Caco-2 (cell line): ENCODE measurements at regions of chr14 and their contacts with region 1.

Region 1: DNA sequence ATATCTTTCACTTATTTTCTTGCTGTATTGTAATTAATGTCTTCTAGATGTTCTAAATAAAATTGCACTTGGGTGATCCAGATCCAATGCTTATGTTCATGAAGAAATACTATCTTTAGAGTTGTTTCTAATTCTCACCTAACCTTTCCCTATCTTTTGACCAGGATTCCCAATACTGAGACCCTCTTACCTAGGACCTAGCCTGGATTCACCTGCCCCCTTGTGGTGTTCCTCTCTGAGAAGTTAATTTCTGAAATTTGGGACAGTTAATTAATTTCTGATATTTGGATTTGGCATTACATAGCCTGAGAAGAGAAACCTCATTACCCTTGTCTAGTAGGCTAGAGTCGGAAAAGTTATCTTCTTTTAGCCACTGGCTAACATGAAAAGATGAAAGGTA is 29.5 kb downstream of the FOXA1 start:
- DNase-seq: peak in 1 of 2 experiments; percentile 54
- H3K4me3 ChIP-seq: peak overlapping the region; percentile 48
- H3K4me3 Mint-ChIP-seq: peak overlapping the region; percentile 88
- H3K27ac Mint-ChIP-seq: peak overlapping the region; percentile 84
- H3K4me1 ChIP-seq: peaks cover 68% of the 10 kb centered on the region
- H3K4me1 Mint-ChIP-seq: peaks cover 38% of the 10 kb centered on the region
- H3K27me3 ChIP-seq: no peaks in the 10 kb centered on the region
- H3K27me3 Mint-ChIP-seq: no peaks in the 10 kb centered on the region
- CTCF ChIP-seq: peak; percentile 67 to 68

Region 2: GRCh38 chr14:37197421-37198272 is 367.9 kb before region 1 on chr14 and contains the start of gene MIPOL1:
- CTCF ChIA-PET with region 1: no interaction called
- POLR2A ChIA-PET with region 1: no interaction called
- intact Hi-C with region 1: no loop called
- DNase-seq: peak; percentile 83 to 86
- H3K4me3 ChIP-seq: peak within 1 kb of the TSS; percentile 73
- H3K4me3 Mint-ChIP-seq: peak within 1 kb of the TSS; percentile 98
- H3K27ac Mint-ChIP-seq: peak within 1 kb of the TSS; percentile 98
- H3K4me1 ChIP-seq: peaks cover 13% of the 10 kb centered on the region; the same call in 1 of the 2 replicates
- H3K4me1 Mint-ChIP-seq: peaks cover 18% of the 10 kb centered on the region
- H3K27me3 ChIP-seq: no peaks in the 10 kb centered on the region
- H3K27me3 Mint-ChIP-seq: no peaks in the 10 kb centered on the region
- CTCF ChIP-seq: peak in 1 of 2 experiments; percentile 52
- total RNA-seq, gene MIPOL1: 18.7 and 20.9 TPM in 2 replicates

Region 3: GRCh38 chr14:37246427-37246914 is 319.1 kb before region 1 on chr14:
- CTCF ChIA-PET with region 1: no interaction called
- POLR2A ChIA-PET with region 1: no interaction called
- intact Hi-C with region 1: loop called (anchors 2 kb)
- DNase-seq: peak in 1 of 2 experiments; percentile 35
- H3K4me3 ChIP-seq: no peak overlapping the region
- H3K4me3 Mint-ChIP-seq: no peak overlapping the region
- H3K27ac Mint-ChIP-seq: no peak overlapping the region
- H3K4me1 ChIP-seq: peaks cover 36% of the 10 kb centered on the region
- H3K4me1 Mint-ChIP-seq: peaks cover 5% of the 10 kb centered on the region
- H3K27me3 ChIP-seq: no peaks in the 10 kb centered on the region
- H3K27me3 Mint-ChIP-seq: no peaks in the 10 kb centered on the region
- CTCF ChIP-seq: peak; percentile 68 to 87

Region 4: DNA sequence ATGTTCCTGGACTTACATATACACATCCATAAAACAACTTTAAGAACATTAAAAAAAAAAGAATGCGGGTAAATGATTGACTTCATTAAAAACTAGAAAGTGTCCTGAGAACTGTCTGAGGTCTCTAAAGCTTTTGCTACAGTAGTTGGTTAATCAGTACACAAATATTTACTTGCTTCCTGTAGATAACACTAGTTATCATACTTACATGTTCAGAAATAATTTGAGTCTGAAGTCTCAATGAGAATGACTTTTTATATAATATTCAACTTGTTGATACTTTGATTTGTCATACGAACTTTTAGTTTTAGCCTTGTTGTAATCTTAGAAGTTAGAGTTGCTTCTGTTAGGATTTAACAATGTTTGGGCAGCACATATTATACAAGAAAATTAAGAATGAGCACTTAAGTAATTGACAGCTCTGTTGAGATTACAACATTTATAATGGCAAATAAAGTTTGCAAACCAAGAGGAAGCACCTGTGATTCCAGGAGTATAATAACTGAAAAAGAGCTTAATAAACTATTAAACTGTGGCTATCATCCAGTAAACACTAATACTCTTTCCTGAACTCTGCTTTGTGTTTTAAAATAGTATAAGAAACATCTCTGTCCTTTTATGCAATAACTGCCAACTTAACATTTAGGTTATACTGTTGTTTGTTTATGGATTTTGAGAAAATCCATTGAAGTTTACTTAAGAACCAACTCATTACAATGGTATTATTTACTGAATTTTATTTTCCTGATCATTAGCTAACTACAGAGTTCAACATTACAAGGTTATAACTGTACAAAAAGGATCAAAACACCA is 236.2 kb before region 1 on chr14:
- CTCF ChIA-PET with region 1: no interaction called
- POLR2A ChIA-PET with region 1: no interaction called
- intact Hi-C with region 1: loop called (anchors 5 kb)
- DNase-seq: peak in 1 of 2 experiments; percentile 27
- H3K4me3 ChIP-seq: no peak overlapping the region
- H3K4me3 Mint-ChIP-seq: peak overlapping the region; percentile 56
- H3K27ac Mint-ChIP-seq: peak overlapping the region; percentile 65
- H3K4me1 ChIP-seq: peaks cover 23% of the 10 kb centered on the region
- H3K4me1 Mint-ChIP-seq: peaks cover 15% of the 10 kb centered on the region
- H3K27me3 ChIP-seq: no peaks in the 10 kb centered on the region
- H3K27me3 Mint-ChIP-seq: no peaks in the 10 kb centered on the region
- CTCF ChIP-seq: no peak

Region 5: GRCh38 chr14:37403626-37404025 is 161.9 kb before region 1 on chr14:
- CTCF ChIA-PET with region 1: no interaction called
- POLR2A ChIA-PET with region 1: no interaction called
- intact Hi-C with region 1: loop called (anchors 5 kb)
- DNase-seq: no peak
- H3K4me3 ChIP-seq: no peak overlapping the region
- H3K4me3 Mint-ChIP-seq: no peak overlapping the region
- H3K27ac Mint-ChIP-seq: no peak overlapping the region
- H3K4me1 ChIP-seq: peaks cover 82% of the 10 kb centered on the region
- H3K4me1 Mint-ChIP-seq: peaks cover 44% of the 10 kb centered on the region
- H3K27me3 ChIP-seq: no peaks in the 10 kb centered on the region
- H3K27me3 Mint-ChIP-seq: no peaks in the 10 kb centered on the region
- CTCF ChIP-seq: no peak

Region 6: DNA sequence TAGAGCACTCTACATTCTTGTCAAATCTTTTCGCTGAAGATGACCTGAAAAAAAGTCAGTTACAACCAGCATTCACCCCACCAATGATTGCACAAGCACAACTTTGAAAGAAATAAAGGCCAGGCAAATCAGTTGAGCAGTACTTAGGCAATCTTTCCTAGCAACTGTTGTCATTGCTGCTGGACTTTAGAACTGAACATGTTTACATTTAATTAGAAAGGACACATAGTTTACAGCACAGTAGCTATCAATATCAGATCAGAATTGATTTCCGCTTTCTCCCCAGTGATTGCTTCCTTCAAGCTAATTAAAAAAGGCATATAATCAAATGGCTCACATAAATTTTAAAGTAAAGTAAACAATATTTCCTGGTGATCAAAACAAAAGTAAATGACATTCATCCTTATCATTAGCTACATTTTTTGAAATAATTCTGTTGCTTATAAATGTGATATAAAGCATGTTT is 98.9 kb before region 1 on chr14:
- CTCF ChIA-PET with region 1: no interaction called
- POLR2A ChIA-PET with region 1: no interaction called
- intact Hi-C with region 1: loop called (anchors 1 kb)
- DNase-seq: peak; percentile 85 to 88
- H3K4me3 ChIP-seq: no peak overlapping the region
- H3K4me3 Mint-ChIP-seq: peak overlapping the region; percentile 48
- H3K27ac Mint-ChIP-seq: peak overlapping the region; percentile 91
- H3K4me1 ChIP-seq: peaks cover 24% of the 10 kb centered on the region
- H3K4me1 Mint-ChIP-seq: peaks cover 11% of the 10 kb centered on the region
- H3K27me3 ChIP-seq: no peaks in the 10 kb centered on the region
- H3K27me3 Mint-ChIP-seq: no peaks in the 10 kb centered on the region
- CTCF ChIP-seq: no peak

Region 7: GRCh38 chr14:37583359-37584231 is 18.0 kb after region 1 on chr14:
- CTCF ChIA-PET with region 1: interaction called, 5 read pairs
- POLR2A ChIA-PET with region 1: interaction called, 7 read pairs
- intact Hi-C with region 1: loop called (anchors 1 kb)
- DNase-seq: peak; percentile 92
- H3K4me3 ChIP-seq: peak overlapping the region; percentile 72
- H3K4me3 Mint-ChIP-seq: peak overlapping the region; percentile 78
- H3K27ac Mint-ChIP-seq: peak overlapping the region; percentile 97
- H3K4me1 ChIP-seq: peaks cover 32% of the 10 kb centered on the region
- H3K4me1 Mint-ChIP-seq: peaks cover 23% of the 10 kb centered on the region
- H3K27me3 ChIP-seq: no peaks in the 10 kb centered on the region
- H3K27me3 Mint-ChIP-seq: no peaks in the 10 kb centered on the region
- CTCF ChIP-seq: peak in 1 of 2 experiments; percentile 3

Region 8: GRCh38 chr14:37623423-37623951 is 57.9 kb after region 1 on chr14:
- CTCF ChIA-PET with region 1: no interaction called
- POLR2A ChIA-PET with region 1: no interaction called
- intact Hi-C with region 1: no loop called
- DNase-seq: no peak
- H3K4me3 ChIP-seq: no peak overlapping the region
- H3K4me3 Mint-ChIP-seq: no peak overlapping the region
- H3K27ac Mint-ChIP-seq: no peak overlapping the region
- H3K4me1 ChIP-seq: peaks cover 7% of the 10 kb centered on the region; the same call in 1 of the 2 replicates
- H3K4me1 Mint-ChIP-seq: peaks cover 5% of the 10 kb centered on the region
- H3K27me3 ChIP-seq: no peaks in the 10 kb centered on the region
- H3K27me3 Mint-ChIP-seq: no peaks in the 10 kb centered on the region
- CTCF ChIP-seq: no peak